MCF 10A (cell line): ENCODE measurements at regions of chr1 and their contacts with region 1.

Region 1: DNA sequence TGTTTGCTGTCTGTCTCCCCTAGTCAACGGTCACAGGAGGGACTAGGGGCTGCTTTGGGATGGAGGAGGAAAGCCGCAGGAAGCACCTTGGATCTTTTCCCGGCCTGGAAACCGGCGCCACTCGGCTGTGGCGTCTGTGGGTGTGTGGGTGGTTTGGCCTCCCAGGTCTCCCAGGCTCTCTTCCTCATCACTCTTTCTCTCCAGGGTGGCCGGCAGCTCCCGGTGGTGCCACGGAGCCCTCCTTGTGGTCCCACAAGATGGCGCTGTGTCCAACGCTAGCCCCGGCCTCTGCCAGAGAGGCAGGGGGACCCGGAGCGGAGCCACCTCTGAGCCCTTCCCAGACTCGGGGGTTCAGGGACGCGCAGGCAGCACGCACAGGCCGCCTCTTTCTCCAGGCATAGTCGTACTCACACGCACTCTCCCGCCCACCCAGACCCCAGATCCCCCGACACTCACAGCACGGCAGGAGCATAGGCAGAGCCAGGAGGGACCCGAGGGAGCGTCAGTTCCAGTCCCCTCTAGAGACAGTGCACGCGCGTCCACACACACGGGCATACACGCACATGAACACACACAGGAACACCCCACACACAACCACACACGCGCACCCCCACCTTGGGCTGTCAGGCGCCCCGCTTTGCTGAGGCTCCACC is 31.2 kb downstream of the CDCP2 start:
- DNase-seq: peak; percentile 65
- H3K4me3 Mint-ChIP-seq: no peak overlapping the region
- H3K27ac Mint-ChIP-seq: no peak overlapping the region
- H3K4me1 Mint-ChIP-seq: no peaks in the 10 kb centered on the region
- H3K27me3 Mint-ChIP-seq: no peaks in the 10 kb centered on the region
- CTCF ChIP-seq: peak; percentile 58

Region 2: GRCh38 chr1:54212872-54213271 is 91.3 kb after region 1 on chr1:
- CTCF ChIA-PET with region 1: no interaction called
- POLR2A ChIA-PET with region 1: no interaction called
- intact Hi-C with region 1: no loop called
- DNase-seq: no peak
- H3K4me3 Mint-ChIP-seq: no peak overlapping the region
- H3K27ac Mint-ChIP-seq: no peak overlapping the region
- H3K4me1 Mint-ChIP-seq: no peaks in the 10 kb centered on the region
- H3K27me3 Mint-ChIP-seq: no peaks in the 10 kb centered on the region
- CTCF ChIP-seq: no peak

Region 3: DNA sequence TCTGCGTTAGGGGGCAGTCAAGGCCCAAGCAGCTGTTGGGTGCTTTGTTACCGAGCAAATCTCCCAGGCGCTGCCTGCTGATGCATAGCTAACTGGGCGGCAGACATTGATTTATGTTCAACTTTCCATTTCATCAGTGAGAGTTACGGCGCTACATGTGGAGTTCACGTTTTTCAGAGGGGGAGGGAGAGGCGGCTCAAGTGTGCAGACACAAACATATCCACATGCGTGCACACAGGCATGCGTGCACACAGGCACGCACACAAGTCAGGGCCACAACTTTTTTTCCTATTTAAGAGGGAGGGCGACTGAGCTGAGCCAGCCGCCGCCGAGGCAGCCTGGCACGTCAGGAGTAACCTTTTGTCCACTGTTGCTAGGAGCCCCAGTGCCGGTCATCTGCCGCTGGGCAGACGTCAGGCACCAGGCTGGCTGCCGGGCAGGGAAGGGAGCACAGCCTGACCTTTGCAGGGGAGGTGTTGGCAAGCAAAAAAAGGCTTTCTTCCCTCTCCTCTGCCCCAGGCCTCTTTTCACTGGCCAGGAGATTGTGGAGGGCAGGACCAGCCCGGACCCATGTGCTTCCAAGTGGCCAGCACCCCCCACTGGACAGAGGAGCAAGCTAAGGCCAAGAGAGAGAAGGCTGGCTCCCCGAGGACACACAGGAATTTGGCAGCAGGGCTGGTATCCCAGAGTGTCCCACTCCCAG is 151.6 kb after region 1 on chr1:
- CTCF ChIA-PET with region 1: no interaction called
- POLR2A ChIA-PET with region 1: no interaction called
- intact Hi-C with region 1: loop called (anchors 10 kb)
- DNase-seq: no peak
- H3K4me3 Mint-ChIP-seq: no peak overlapping the region
- H3K27ac Mint-ChIP-seq: no peak overlapping the region
- H3K4me1 Mint-ChIP-seq: no peaks in the 10 kb centered on the region
- H3K27me3 Mint-ChIP-seq: no peaks in the 10 kb centered on the region
- CTCF ChIP-seq: no peak

Region 4: GRCh38 chr1:54406339-54407153 is 284.9 kb after region 1 on chr1 and contains the start of gene SSBP3:
- CTCF ChIA-PET with region 1: no interaction called
- POLR2A ChIA-PET with region 1: no interaction called
- intact Hi-C with region 1: loop called (anchors 1 kb)
- DNase-seq: peak; percentile 91
- H3K4me3 Mint-ChIP-seq: peak within 1 kb of the TSS; percentile 83
- H3K27ac Mint-ChIP-seq: peak within 1 kb of the TSS; percentile 96
- H3K4me1 Mint-ChIP-seq: peaks cover 28% of the 10 kb centered on the region
- H3K27me3 Mint-ChIP-seq: no peaks in the 10 kb centered on the region
- CTCF ChIP-seq: no peak
- total RNA-seq, gene SSBP3: 6.5 and 8.6 TPM in 2 replicates